Cardiac septum (tissue), 1 donor: ENCODE measurements at regions of chr7 and their contacts with region 1.

Region 1: DNA sequence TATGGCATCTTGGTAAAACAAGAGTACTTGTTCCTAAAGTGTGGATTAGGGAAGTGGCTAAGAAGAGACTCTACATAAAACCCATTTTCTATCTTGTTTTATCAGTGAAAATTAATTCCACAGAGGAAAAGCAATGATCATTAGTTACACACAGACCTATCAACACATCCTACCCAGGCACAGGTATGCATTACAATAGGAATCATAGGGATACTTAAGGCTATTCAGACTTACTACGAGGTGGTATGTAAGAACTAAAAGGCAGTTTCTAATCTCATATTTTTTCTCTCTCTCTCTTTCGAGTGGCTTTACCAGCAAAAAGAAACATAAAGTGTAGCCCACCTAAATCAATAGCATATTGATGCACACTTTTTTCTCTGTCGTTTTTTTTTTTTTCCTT is 166.3 kb upstream of the FEZF1 start:
- DNase-seq: no peak

Region 2: DNA sequence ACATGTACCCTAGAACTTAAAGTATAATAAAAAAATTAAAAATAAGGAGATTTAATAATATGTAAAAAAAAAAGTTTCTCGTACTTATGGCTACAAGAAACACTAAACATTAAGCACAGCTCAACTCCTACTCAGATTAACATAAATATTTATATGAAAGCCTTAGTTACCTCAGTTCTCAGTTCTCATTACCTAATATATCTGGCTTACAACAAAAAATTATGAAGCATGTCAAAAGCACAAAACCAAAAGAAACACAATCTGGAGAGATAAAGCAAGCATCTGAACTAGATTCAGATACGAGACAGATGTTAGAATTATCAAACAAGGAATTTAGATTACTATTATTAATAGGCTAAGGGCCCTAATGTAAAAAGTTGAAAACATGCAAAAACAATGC is 188.0 kb after region 1 on chr7:
- intact Hi-C with region 1: loop called (anchors 5 kb)
- DNase-seq: no peak